A673 (cell line): ENCODE measurements at regions of chr1 and their contacts with region 1.

Region 1: GRCh38 chr1:170531758-170532657 is at the start of gene GORAB:
- DNase-seq: peak; percentile 96
- H3K4me3 ChIP-seq: peak within 1 kb of the TSS; percentile 62
- H3K27ac ChIP-seq: peak within 1 kb of the TSS; percentile 93
- H3K4me1 ChIP-seq: no peaks in the 10 kb centered on the region
- H3K27me3 ChIP-seq: no peaks in the 10 kb centered on the region
- CTCF ChIP-seq: no peak
- total RNA-seq, gene GORAB: 10.9 and 13.6 TPM in 2 replicates

Region 2: DNA sequence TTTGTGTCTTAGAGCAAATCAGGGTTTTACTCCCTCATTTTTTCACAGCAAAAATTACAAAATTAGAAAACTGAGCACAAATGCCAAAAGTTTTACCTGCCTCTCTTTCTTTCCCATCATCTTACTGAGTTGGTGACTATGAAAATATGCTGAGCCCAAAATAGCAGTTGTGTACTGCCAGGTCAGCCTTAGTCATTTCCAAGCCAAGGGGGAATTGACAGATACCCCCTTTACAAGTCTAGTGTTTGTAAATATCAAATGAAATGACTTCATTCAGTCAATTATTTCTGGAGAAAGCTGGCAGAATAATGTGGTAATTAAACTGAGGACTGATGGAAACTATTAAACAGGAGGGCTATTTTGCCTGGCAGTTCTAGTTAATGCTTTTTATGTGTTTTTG is 11.4 kb before region 1 on chr1:
- CTCF ChIA-PET with region 1: no interaction called
- POLR2A ChIA-PET with region 1: interaction called, 21 read pairs
- intact Hi-C with region 1: no loop called
- DNase-seq: no peak
- H3K4me3 ChIP-seq: no peak overlapping the region
- H3K27ac ChIP-seq: no peak overlapping the region
- H3K4me1 ChIP-seq: no peaks in the 10 kb centered on the region
- H3K27me3 ChIP-seq: peaks cover 18% of the 10 kb centered on the region
- CTCF ChIP-seq: no peak

Region 3: GRCh38 chr1:170562646-170563338 is 30.8 kb after region 1 on chr1:
- CTCF ChIA-PET with region 1: no interaction called
- POLR2A ChIA-PET with region 1: no interaction called
- intact Hi-C with region 1: no loop called
- DNase-seq: peak; percentile 92
- H3K4me3 ChIP-seq: no peak overlapping the region
- H3K27ac ChIP-seq: peak overlapping the region; percentile 76
- H3K4me1 ChIP-seq: peaks cover 24% of the 10 kb centered on the region
- H3K27me3 ChIP-seq: no peaks in the 10 kb centered on the region
- CTCF ChIP-seq: no peak

Region 4: DNA sequence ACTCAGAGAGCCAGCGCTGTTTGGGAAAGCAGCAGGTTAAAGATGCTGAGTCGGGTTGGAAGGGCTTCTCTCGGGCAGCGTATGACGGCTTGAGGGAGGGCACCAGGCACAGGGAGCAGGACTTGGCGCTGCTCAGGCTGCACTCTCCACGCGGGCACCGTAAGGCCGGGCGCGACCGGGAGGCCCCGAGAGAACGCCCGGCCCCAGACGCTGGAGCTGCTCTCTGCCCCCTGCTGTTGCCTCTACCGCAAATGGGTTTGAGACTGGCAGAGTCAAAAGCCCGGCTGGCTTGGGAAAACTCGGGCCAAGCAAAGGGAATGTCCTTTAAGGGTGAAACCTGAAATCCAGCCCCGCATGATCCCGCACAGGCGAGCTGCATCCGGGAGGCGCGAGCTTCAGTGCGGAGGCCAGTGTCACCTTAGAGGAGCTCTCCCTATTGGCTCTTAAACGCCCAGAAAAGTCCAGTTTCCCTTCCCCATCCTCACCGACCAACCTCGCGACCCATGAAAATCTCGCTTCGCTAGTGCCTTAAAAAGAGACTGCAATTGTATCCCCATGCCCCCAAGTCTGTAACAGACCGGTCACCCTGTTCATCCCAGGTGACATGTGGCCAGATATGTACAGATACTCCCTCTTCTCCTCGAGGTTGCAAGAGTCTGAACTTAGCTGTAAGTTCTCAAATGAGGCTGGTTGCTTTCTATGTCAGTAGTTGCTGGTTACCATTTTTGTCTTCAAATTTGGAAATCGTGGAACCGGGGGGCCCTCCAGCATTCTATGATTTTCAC is 133.0 kb after region 1 on chr1:
- CTCF ChIA-PET with region 1: no interaction called
- POLR2A ChIA-PET with region 1: no interaction called
- intact Hi-C with region 1: loop called (anchors 5 kb)
- DNase-seq: no peak
- H3K4me3 ChIP-seq: peak overlapping the region; percentile 44
- H3K27ac ChIP-seq: no peak overlapping the region
- H3K4me1 ChIP-seq: peaks cover 15% of the 10 kb centered on the region
- H3K27me3 ChIP-seq: peaks cover 78% of the 10 kb centered on the region
- CTCF ChIP-seq: 0 out of 2 replicates have a peak, but pooled peaks have one; percentile 16